HepG2 (cell line): ENCODE measurements at regions of chr11 and their contacts with region 1.

Region 1: DNA sequence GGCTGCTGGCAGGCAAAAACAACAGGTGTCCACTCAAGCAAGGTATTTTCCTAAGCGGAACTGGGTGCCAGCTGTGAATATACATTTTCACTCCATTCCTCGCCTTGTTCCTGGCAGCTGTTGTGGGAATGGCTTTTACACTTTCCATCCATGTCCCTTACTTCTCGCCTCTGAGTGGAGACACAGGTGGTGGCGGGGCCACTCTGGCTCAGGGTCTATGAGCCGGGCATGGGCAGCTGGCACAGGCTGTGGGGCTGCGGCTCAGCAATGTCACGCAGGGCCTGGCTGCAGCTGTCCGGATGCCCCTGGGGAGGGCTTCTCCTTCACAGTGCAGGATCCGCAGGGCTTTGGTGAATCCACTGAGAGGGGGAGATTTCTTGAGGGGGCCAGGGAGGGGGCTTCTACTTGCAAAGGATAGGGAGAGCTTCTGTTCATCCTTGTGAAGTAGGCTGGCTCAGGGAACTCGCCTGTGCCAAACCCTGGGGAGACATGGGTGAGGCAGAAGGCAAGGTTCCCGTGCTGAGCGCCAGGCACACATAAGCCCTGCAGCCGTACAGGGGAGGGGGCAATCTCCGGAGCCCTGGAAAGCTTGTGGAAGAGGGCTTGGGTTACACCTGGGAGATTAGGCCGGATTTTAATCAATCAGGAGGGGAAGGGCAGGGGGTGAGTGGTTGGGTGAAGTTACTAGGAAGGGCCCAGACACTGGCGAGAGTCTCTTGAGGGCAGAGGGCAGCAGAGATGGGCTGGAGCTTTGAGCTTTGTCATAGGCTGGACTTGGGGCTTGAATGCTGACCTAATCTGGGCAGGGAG is 45.7 kb downstream of the KCNQ1OT1 start:
- DNase-seq: no peak
- ATAC-seq: peak; percentile 12; the same call in 2 of the 3 replicates
- H3K4me3 ChIP-seq: no peak overlapping the region
- H3K27ac ChIP-seq: no peak overlapping the region
- H3K4me1 ChIP-seq: 0 out of 2 replicates have a peak, but pooled peaks cover 5% of the 10 kb centered on the region
- H3K27me3 ChIP-seq: no peaks in the 10 kb centered on the region
- CTCF ChIP-seq: no peak
- EP300 ChIP-seq: no peak
- POLR2A ChIP-seq: peak in 1 of 2 experiments; percentile 48; a peak in 1 of 4 replicates
- RAD21 ChIP-seq: no peak

Region 2: DNA sequence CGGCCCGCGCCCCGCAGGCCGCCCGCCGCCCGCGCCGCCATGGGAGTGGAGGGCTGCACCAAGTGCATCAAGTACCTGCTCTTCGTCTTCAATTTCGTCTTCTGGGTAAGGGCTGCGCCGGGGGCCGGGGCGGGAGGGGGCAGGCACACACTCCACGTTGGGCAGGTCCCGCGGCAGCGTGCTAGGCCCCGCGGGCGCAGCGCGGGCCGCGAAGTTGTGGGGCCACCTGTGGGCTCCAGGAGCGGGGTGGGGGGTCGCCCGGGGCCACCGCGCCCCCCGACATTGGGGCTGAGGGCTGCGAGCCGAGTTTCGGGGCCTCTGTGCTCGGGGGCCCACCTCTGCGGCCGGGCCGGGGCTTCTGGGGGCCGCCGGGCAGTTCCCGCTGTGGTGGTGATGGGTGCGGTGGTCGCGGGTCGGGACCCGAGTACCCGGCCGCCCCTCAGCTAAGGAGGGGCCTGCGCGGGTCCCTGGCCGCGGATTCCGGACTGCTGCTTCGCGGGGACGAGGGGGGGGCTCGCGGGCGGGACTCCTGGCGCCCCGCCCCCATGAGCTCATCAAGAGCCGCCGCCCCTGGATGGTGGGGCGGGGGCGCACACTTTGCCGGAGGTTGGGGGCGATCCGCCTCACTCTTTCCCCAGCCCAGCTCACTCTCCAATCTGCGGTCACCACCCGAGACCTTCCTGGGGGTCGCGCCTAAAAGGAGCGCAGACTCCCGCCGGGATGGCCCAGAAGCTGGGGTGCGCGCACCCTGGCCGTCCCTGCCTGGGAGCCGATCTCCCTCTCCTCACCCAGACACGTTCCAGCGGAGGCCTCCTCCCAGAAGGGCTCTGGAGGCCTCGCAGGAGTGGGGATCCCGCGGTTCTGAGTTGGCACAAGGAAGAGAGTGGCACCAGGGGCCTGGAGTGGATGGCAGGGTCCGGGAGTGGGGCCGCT is 276.4 kb before region 1 on chr11:
- CTCF ChIA-PET with region 1: no interaction called
- POLR2A ChIA-PET with region 1: no interaction called
- in situ Hi-C with region 1: no loop called
- intact Hi-C with region 1: no loop called
- DNase-seq: no peak
- ATAC-seq: no peak
- H3K4me3 ChIP-seq: no peak overlapping the region
- H3K27ac ChIP-seq: no peak overlapping the region
- H3K4me1 ChIP-seq: peaks cover 7% of the 10 kb centered on the region; the same call in 1 of the 2 replicates
- H3K27me3 ChIP-seq: peaks cover 9 to 77% of the 10 kb centered on the region in 2 experiments
- CTCF ChIP-seq: no peak
- EP300 ChIP-seq: no peak
- POLR2A ChIP-seq: no peak
- RAD21 ChIP-seq: no peak

Region 3: DNA sequence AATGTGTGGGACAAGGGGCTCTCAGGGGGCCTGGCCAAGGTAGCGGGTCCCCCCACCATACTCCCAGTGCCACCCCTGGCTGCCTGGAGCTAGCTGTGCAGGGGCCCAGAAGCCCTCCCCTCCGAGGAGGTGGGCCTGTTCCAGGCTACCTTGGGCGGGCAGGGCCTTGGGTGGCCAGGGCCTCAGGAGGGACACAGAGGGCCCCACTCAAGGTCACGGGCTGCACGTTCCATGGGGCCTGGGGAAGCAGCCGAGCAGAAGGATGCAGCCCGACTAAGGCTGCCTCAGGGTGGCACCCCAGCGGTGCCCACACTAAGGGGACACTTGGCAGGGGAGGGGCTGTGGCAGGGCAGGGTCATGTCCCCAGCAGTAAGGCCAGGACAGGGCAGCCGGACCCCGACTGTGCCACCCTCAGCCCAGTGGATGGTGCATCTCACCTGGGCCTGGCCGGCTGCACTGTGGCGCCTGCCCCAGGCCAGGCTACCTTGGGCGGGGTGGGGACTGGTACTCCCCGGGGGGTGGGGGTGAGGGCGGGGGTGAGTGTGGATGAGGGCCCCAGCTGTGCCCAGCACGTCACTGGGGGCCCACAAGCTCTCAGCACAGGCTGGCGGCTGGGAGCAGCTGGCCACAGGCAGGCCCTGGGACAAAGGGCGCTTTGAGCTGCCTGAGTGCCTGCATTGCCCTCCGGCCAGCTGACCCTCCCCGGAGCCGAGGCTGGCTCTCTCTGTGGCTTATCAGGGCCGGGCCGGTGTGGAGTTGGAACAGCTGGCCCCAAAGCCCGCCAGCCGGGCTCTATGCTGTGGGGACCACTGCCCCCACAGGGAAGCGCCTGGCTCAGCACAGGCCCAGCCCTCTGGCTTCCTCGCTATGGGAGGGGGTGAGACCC is 92.2 kb before region 1 on chr11:
- CTCF ChIA-PET with region 1: no interaction called
- POLR2A ChIA-PET with region 1: interaction called, 4 read pairs
- in situ Hi-C with region 1: no loop called
- intact Hi-C with region 1: loop called (anchors 2 kb)
- DNase-seq: peak; percentile 76
- ATAC-seq: peak; percentile 86
- H3K4me3 ChIP-seq: peak overlapping the region in 1 of 3 experiments; percentile 39; a peak in 1 of 6 replicates
- H3K27ac ChIP-seq: peak overlapping the region; percentile 91
- H3K4me1 ChIP-seq: peaks cover 60% of the 10 kb centered on the region
- H3K27me3 ChIP-seq: peaks cover 7 to 26% of the 10 kb centered on the region in 2 experiments; a peak in 4 of 5 replicates
- CTCF ChIP-seq: no peak
- EP300 ChIP-seq: peak in 1 of 2 experiments; percentile 50; a peak in 1 of 4 replicates
- POLR2A ChIP-seq: no peak
- RAD21 ChIP-seq: 0 out of 2 replicates have a peak, but pooled peaks have one; percentile 20

Region 4: DNA sequence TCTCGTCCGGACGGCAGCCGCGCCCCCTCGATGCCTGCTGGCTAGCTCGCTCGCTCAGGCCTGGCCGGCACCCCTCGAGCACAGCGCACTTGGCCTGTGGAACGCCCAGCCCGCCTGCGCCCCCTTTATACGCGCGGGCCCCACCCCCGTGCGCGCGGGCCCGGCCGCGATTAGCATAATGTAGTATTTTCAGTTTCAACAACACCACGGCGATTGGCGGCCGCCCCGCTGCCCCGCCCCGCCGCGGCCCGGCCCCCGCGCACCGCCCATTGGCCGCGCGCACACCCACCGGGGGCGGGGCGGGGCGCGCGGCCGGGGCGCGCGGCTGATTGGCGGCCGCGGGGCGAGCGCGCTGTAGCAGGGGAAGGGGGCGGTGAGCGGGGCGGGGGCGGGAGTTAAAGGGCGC is 231.5 kb after region 1 on chr11 and contains the start of gene CDKN1C:
- CTCF ChIA-PET with region 1: no interaction called
- POLR2A ChIA-PET with region 1: no interaction called
- in situ Hi-C with region 1: no loop called
- intact Hi-C with region 1: loop called (anchors 2 kb)
- DNase-seq: no peak
- ATAC-seq: no peak
- H3K4me3 ChIP-seq: no peak within 1 kb of the TSS
- H3K27ac ChIP-seq: no peak within 1 kb of the TSS
- H3K4me1 ChIP-seq: peaks cover 25% of the 10 kb centered on the region
- H3K27me3 ChIP-seq: peaks cover 6 to 33% of the 10 kb centered on the region in 2 experiments; a peak in 4 of 5 replicates
- CTCF ChIP-seq: no peak
- EP300 ChIP-seq: no peak
- POLR2A ChIP-seq: no peak
- RAD21 ChIP-seq: no peak
- total RNA-seq, gene CDKN1C: not detected in 2 replicates